GM10248 (cell line): ENCODE measurements at regions of chr17 and their contacts with region 1.

Region 1: GRCh38 chr17:1516388-1517161 is at the start of gene INPP5K:
- DNase-seq: peak; percentile 99
- CTCF ChIP-seq: no peak

Region 2: GRCh38 chr17:1260086-1260769 is 256.3 kb before region 1 on chr17:
- CTCF ChIA-PET with region 1: interaction called, 14 read pairs
- POLR2A ChIA-PET with region 1: no interaction called
- DNase-seq: no peak
- CTCF ChIP-seq: no peak

Region 3: DNA sequence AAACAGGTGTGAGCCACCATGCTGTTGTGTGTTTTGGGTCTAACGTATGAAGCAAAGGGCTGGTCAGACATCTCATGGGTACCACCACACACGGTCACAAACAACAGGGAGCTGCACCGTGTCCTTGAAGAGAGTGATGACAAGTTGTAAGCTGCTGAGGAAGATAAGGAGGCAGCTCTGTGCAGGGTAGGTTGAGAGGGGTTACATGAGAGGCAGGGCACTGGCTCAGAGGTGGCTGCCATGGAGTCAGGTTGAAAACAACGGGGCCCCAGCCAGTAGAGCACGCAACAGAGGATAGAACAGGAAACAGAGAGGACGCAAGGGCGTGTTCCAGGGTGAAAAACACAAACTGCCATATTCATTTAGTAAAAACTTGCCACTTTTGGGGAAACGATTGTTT is 184.9 kb before region 1 on chr17:
- CTCF ChIA-PET with region 1: interaction called, 10 read pairs
- POLR2A ChIA-PET with region 1: no interaction called
- DNase-seq: no peak
- CTCF ChIP-seq: no peak

Region 4: DNA sequence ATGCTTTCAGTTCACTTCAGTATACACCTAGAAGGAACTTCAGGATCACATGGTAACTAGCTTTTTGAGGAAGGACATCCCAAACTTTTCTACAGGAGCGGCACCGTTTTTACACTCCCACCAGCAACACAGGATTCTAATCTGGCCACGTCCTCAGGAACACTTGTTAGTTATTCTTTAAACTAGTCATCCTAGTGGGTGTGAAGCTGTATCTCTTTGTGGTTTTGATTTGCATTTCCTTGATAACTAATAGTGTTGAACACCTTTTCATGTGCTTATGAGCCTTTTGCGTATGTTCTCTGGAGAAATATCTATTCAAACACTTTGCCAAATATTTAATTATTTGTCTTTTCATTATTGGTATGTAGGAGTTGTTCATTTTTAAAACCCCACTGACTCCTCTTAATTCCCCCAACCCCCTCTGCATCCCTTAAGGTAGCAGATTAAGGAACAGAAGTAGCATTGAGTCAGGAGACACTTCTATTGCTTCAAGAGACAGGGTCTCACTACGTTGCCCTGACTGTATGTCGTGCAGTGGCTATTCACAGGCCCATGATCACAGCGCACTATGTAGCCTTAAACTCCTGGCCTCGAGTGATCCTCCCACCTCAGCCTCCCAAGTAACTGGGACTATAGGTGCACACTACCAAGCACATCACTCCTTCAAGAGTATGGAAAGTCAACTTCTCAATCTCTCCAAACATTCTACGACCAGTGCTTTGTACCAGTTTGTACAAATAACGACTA is 142.0 kb before region 1 on chr17:
- CTCF ChIA-PET with region 1: interaction called, 12 read pairs
- POLR2A ChIA-PET with region 1: no interaction called
- DNase-seq: peak; percentile 42
- CTCF ChIP-seq: no peak

Region 5: DNA sequence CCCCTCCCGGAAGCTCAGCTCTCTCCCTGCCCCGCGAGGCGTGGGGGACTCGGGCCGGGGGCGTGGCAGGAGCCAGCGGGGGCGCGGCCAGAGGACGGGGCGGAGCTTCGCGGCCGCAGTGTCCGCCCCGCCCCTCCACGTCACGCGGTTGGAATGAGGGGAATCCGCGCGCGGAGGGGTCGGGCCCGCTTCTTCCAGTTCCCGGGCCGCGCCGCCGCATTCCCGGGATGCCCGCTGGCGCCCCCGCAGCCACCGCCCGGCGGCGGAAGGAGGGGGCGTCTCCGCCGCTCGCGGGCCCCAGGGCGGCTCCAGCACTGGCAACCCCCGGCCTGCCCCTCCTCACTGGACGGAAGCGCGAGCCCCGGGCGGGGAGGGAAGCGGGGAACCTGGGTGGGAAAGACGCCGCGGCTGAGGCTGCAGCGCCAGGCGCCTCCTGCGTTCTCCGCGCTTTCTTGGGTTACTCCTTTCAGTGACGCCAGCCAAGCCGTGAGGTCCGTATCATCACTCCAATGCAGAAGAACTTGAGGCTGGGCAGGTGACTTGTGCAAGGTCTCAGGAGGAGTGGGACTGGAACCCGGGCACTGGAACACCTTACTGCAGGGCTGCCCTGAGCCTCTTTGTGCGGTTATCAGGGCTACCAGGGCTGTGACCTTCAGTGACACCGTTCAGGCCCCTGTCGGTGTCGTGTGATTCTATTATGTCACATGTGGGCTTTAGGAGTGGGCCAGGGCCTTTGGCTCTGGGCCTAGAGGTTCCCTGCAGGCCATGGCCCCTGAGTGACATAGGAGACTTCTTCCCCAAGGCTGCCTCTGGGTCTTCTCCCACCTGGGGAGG is 28.3 kb before region 1 on chr17:
- CTCF ChIA-PET with region 1: interaction called, 16 read pairs
- POLR2A ChIA-PET with region 1: interaction called, 5 read pairs
- DNase-seq: peak; percentile 85
- CTCF ChIP-seq: no peak

Region 6: DNA sequence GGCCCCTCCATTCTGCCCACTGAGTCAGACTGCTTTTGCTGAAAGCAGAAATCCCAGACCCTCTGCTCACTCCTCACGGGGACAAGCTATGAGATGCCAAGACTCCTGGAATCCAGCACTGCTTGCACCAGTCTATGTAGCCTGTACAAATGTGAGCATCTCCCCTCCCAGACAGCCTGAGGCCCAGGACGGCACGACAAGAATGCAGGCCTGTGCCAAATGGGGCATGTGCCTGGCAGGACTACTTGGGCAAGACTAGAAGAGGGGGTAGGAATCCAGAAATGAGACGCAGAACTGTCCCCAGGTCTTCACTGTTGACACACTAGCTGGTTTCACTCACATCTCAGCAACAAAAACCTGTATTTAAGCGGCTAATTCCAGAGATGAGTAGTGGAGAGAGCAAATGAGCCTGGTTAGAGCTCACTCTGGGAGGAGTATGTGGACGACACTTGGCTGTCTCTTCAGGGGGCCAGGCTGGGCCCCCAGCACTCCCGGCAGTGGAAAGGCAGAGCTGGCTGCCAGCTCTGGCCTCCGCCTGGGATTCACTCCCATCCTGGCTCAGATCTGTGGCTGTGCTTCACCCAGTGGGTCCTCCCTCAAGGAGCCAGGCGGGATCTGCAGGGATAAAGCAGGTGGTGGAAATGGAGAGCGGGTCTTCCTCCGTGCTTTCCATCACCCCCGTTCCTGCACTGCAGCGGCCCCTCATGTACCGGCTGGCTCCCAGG is 21.1 kb before region 1 on chr17:
- CTCF ChIA-PET with region 1: interaction called, 21 read pairs
- POLR2A ChIA-PET with region 1: interaction called, 5 read pairs
- DNase-seq: no peak
- CTCF ChIP-seq: no peak